Posterior cingulate gyrus (tissue), 11 donors: ENCODE measurements at regions of chr10 and their contacts with region 1.

Region 1: GRCh38 chr10:69644658-69645295 is 14.7 kb downstream of the FAM241B start:
- DNase-seq: peak; percentile 53 to 95 (median 70)

Region 2: GRCh38 chr10:69663369-69663947 is 18.7 kb after region 1 on chr10:
- intact Hi-C with region 1: no loop called
- DNase-seq: peak in 1 of 10 donors; percentile 45

Region 3: GRCh38 chr10:69716711-69717560 is 72.2 kb after region 1 on chr10:
- intact Hi-C with region 1: loop called (anchors 2 kb)
- DNase-seq: peak in 7 of 10 donors; percentile 50 to 91 (median 67)

Region 4: DNA sequence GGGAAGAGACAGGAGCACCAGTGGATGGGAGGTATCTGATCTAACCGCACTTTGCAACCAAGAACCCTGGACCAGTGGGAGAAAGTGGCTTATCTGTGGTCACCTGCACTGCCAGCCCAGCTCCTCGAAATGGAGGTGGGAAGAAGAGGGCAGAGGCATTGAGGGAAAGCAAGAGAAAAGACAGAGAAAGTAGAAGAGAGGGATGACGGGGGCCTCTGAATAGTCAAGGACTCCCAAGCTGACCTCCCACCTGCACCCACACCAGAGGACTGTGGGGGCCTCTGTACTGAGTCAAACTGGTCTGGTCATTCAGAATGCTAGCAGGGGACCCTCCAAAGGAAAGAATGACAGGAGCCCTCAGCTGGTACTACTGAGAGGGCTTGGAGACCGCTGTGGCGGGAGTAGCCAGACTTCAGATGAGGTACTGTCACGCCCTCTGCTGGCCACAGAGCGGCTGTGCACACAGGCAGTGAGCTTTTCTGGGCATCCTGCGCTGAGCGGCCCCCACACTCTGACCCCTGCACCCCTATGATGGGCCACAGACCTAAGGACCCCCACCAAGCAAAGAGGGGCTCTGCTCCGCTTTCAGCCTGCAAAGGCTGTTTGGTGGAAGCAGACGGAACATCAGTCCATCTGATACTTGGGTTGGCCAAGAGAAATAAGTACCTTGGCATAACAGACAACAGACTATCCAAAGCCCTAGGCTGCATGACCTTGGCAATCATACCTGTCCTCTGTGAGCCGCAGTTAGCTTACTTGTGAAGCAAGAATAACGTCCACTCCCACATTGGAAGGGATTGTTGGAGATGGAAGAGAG is 269.8 kb after region 1 on chr10:
- intact Hi-C with region 1: loop called (anchors 1 kb)
- DNase-seq: peak; percentile 50 to 95 (median 83)